Heart left ventricle (tissue), 16 donors: ENCODE measurements at regions of chr10 and their contacts with region 1.

Region 1: GRCh38 chr10:66931340-66931948 is 5.6 kb downstream of the LRRTM3 start:
- DNase-seq: no peak
- ATAC-seq: peak in 3 of 4 donors; percentile 45 to 57 (median 57)
- H3K4me3 ChIP-seq: no peak overlapping the region
- H3K27ac ChIP-seq: no peak overlapping the region
- H3K4me1 ChIP-seq: peaks cover 0 to 10% (median 0%) of the 10 kb centered on the region in 12 donors
- H3K27me3 ChIP-seq: peaks cover 0 to 41% (median 4%) of the 10 kb centered on the region in 9 donors
- CTCF ChIP-seq: peak; percentile 54 to 86 (median 76)
- POLR2A ChIP-seq: no peak

Region 2: DNA sequence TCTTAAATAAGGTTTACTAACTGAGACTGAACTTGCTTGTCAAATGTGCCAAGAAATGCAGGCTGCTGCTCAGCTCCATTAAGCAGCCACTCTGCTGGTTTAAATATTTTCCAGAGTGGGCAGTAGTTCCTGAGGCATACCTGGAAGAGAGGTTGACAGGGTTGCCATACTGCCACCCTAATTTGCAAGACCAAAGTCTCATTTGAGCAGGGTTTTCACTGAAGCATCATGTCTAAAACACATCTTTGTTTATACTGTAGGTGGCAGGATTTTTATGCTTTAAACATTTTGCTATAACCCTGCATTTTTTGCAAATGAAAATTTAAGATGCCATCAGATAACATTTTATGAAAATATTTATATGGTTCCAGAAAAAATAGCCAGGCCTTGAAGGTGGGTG is 623.6 kb before region 1 on chr10:
- intact Hi-C with region 1: loop called in 1 of 10 experiments (anchors 10 kb)
- DNase-seq: no peak
- ATAC-seq: no peak
- H3K4me3 ChIP-seq: no peak overlapping the region
- H3K27ac ChIP-seq: no peak overlapping the region
- H3K4me1 ChIP-seq: no peaks in the 10 kb centered on the region
- H3K27me3 ChIP-seq: no peaks in the 10 kb centered on the region
- CTCF ChIP-seq: peak in 5 of 12 donors; percentile 7 to 21 (median 18)
- POLR2A ChIP-seq: no peak

Region 3: GRCh38 chr10:67520924-67521520 is 589.6 kb after region 1 on chr10:
- intact Hi-C with region 1: loop called in 4 of 10 experiments (anchors 10 kb)
- DNase-seq: peak in 2 of 5 donors; percentile 8 to 31
- ATAC-seq: peak; percentile 58 to 79 (median 74)
- H3K4me3 ChIP-seq: no peak overlapping the region
- H3K27ac ChIP-seq: no peak overlapping the region
- H3K4me1 ChIP-seq: peaks cover 0 to 4% (median 0%) of the 10 kb centered on the region in 12 donors
- H3K27me3 ChIP-seq: no peaks in the 10 kb centered on the region
- CTCF ChIP-seq: peak; percentile 44 to 78 (median 67)
- POLR2A ChIP-seq: no peak